ENCODE measurements at regions of chr5 and their contacts with region 1.

Region 1: GRCh38 chr5:923281-923873 is 30.7 kb downstream of the TRIP13 start:
- DNase-seq: peak; percentile 82
- H3K4me3 Mint-ChIP-seq: no peak overlapping the region
- H3K27ac Mint-ChIP-seq: no peak overlapping the region
- H3K4me1 Mint-ChIP-seq: peaks cover 13% of the 10 kb centered on the region
- H3K27me3 Mint-ChIP-seq: peaks cover 28% of the 10 kb centered on the region

Region 2: GRCh38 chr5:1140171-1140817 is 216.9 kb after region 1 on chr5:
- CTCF ChIA-PET with region 1: interaction called, 19 read pairs
- POLR2A ChIA-PET with region 1: no interaction called
- DNase-seq: peak; percentile 90
- H3K4me3 Mint-ChIP-seq: no peak overlapping the region
- H3K27ac Mint-ChIP-seq: no peak overlapping the region
- H3K4me1 Mint-ChIP-seq: peaks cover 10% of the 10 kb centered on the region
- H3K27me3 Mint-ChIP-seq: peaks cover 4% of the 10 kb centered on the region

Measured in activated CD4-positive, alpha-beta T cell treated with anti-CD3 and anti-CD28 coated beads, Interleukin-2, amount 10 ng/mL, durations not matched to agents 7 days and 5 days (primary cell).